BJ (cell line): ENCODE measurements at regions of chr6 and their contacts with region 1.

Region 1: GRCh38 chr6:73520688-73521350 is at the start of gene EEF1A1:
- DNase-seq: peak; percentile 96
- H3K4me3 ChIP-seq: peak within 1 kb of the TSS; percentile 96
- H3K27me3 ChIP-seq: no peaks in the 10 kb centered on the region
- CTCF ChIP-seq: no peak
- polyA plus RNA-seq, gene EEF1A1: 20,981 and 25,088 TPM in 2 replicates

Region 2: GRCh38 chr6:73264446-73264845 is 256.4 kb before region 1 on chr6:
- CTCF ChIA-PET with region 1: no interaction called
- POLR2A ChIA-PET with region 1: no interaction called
- DNase-seq: no peak
- H3K4me3 ChIP-seq: no peak overlapping the region
- H3K27me3 ChIP-seq: no peaks in the 10 kb centered on the region
- CTCF ChIP-seq: no peak

Region 3: DNA sequence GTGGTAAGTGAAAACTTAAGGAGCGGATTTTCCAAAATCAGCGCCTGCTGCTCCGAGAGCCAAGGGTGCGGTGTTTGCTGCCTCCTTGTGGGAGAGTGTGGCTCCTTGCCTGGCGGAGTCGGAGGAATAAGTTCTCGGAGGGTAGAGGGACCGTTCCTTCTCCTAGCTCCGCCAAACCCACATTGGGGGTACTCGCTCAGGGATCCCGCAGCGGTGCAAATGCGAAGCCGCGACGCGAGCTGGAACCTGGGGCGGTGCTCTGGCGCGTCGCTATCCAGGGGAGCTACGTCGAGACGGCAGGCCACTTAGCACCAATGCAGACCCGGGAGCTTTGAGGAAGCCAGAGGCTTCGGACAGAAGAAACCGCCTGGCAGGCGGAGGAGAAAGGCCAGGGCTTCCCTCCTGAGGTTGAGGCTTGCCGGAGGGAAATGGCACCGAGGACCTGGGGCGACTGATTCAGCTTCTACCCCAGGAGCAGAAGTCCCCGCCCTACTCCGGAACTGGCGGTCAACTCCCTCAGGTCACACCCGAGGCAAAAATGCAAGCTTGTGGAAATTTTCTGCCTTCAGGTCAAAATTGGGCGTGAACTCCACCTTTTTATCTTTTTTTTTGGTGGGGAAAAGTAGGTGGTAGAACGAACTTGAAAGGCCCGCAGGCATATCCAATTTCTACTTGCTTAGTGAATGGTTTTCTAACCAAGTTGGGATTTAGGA is 131.9 kb before region 1 on chr6:
- CTCF ChIA-PET with region 1: no interaction called
- POLR2A ChIA-PET with region 1: interaction called, 11 read pairs
- DNase-seq: peak; percentile 15
- H3K4me3 ChIP-seq: peak overlapping the region; percentile 44
- H3K27me3 ChIP-seq: no peaks in the 10 kb centered on the region
- CTCF ChIP-seq: peak; percentile 85

Region 4: GRCh38 chr6:73461537-73462350 is 59.1 kb before region 1 on chr6 and contains the start of gene MTO1:
- CTCF ChIA-PET with region 1: no interaction called
- POLR2A ChIA-PET with region 1: interaction called, 10 read pairs
- DNase-seq: peak; percentile 48
- H3K4me3 ChIP-seq: peak within 1 kb of the TSS; percentile 79
- H3K27me3 ChIP-seq: no peaks in the 10 kb centered on the region
- CTCF ChIP-seq: no peak
- polyA plus RNA-seq, gene MTO1: 17.7 and 22.3 TPM in 2 replicates

Region 5: DNA sequence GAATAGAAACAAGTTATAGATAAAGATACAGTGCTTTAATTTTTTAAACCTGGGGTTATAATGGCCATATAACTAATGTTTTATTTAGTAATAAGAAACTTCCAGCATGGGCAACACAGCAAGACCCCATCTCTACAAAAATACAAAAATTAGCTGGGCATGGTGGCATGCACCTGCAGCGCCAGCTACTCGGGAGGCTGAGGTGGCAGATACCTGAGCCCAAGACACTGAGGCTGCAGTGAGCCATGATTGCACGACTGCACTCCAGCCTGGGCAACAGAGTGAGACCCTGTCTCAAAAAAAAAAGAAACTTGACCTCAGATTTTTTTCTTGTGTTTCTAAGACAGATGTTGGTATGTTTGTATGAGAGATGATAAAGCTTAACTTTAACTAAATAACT is 22.9 kb before region 1 on chr6:
- CTCF ChIA-PET with region 1: no interaction called
- POLR2A ChIA-PET with region 1: no interaction called
- DNase-seq: no peak
- H3K4me3 ChIP-seq: no peak overlapping the region
- H3K27me3 ChIP-seq: no peaks in the 10 kb centered on the region
- CTCF ChIP-seq: no peak

Region 6: GRCh38 chr6:73558624-73559398 is 38.0 kb after region 1 on chr6:
- CTCF ChIA-PET with region 1: no interaction called
- POLR2A ChIA-PET with region 1: no interaction called
- DNase-seq: no peak
- H3K4me3 ChIP-seq: no peak overlapping the region
- H3K27me3 ChIP-seq: no peaks in the 10 kb centered on the region
- CTCF ChIP-seq: no peak

Region 7: DNA sequence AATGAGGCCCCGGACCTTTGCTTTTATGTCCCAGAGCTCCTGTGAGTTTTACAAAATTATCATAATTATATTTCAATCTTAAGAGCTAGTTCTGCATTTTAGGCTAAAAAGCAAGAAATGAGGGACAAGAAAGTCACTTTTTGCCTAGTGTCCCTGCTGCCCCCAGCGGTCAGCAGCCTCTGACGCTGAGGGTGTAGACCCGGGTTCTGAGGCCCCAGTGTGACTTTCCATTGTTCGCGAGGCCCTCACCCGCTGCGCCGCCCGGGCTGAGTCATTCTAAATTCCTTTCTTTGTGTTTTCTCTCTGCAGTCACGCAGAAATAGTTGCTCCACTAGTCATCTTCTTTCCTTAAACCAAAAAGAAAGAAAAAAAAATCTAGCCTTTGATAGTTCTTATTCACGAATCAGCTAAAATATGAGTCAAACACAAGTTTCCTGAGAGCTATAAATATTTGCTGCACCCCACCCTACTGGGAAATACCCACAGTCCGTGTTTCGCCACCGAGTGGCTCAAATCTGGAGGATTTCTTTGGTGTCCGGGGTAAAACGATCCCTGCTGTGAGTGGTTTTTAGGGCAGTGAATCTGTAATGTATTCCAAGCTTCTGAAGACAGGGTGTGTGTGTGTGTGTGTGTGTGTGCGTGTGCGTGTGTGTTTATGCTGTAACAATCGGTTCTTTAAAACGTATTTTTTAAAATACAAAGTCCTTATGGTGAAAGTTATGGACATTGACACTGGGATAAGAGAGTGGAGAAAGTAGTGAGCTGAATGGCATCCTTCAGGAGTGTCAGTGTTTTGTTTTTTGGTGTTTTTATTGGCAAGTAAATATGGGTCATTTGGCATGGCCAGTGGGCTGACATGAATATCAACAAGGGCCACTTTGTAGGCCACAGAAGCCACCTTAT is 59.7 kb after region 1 on chr6:
- CTCF ChIA-PET with region 1: interaction called, 22 read pairs
- POLR2A ChIA-PET with region 1: interaction called, 34 read pairs
- DNase-seq: peak; percentile 99
- H3K4me3 ChIP-seq: peak overlapping the region; percentile 23
- H3K27me3 ChIP-seq: no peaks in the 10 kb centered on the region
- CTCF ChIP-seq: peak; percentile 61

Region 8: GRCh38 chr6:73610444-73611275 is 89.8 kb after region 1 on chr6:
- CTCF ChIA-PET with region 1: interaction called, 56 read pairs
- POLR2A ChIA-PET with region 1: interaction called, 6 read pairs
- DNase-seq: peak; percentile 31
- H3K4me3 ChIP-seq: no peak overlapping the region
- H3K27me3 ChIP-seq: no peaks in the 10 kb centered on the region
- CTCF ChIP-seq: peak; percentile 57

Region 9: DNA sequence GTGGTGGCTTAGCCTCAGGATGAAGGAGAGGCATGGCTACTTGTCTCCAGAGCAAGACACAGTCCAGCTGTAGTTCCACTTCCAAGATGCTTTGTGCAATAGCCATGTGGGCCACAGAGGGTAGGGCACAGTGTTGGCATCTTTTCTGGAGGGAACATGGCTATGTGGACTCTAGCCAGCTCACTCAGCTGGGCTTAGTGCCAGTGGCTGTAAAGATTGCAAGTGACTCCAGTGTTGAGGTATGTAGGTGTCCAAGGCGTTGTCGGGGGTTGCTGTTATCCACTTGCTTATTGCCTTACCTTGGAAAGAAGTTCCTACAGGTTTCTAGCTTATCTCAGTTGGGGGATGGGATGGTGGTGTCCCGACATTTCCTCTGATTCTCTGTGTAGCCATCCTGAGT is 408.6 kb after region 1 on chr6:
- CTCF ChIA-PET with region 1: no interaction called
- POLR2A ChIA-PET with region 1: no interaction called
- DNase-seq: no peak
- H3K4me3 ChIP-seq: no peak overlapping the region
- H3K27me3 ChIP-seq: no peaks in the 10 kb centered on the region
- CTCF ChIP-seq: no peak